Naive thymus-derived CD4-positive, alpha-beta T cell (primary cell): ENCODE measurements at regions of chr6 and their contacts with region 1.

Region 1: GRCh38 chr6:31769684-31770371 is 7.3 kb downstream of the VWA7 start:
- DNase-seq: peak; percentile 56 to 85 (median 71)
- ATAC-seq: peak; percentile 89
- H3K4me3 ChIP-seq: no peak overlapping the region
- H3K4me3 Mint-ChIP-seq: peak overlapping the region in 3 of 10 donors; percentile 2 to 45 (median 7)
- H3K27ac ChIP-seq: no peak overlapping the region
- H3K27ac Mint-ChIP-seq: peak overlapping the region in 4 of 9 donors; percentile 6 to 68 (median 38)
- H3K4me1 ChIP-seq: peaks cover 23 to 27% of the 10 kb centered on the region in 2 donors
- H3K4me1 Mint-ChIP-seq: peaks cover 4 to 38% (median 34%) of the 10 kb centered on the region in 7 donors
- H3K27me3 ChIP-seq: no peaks in the 10 kb centered on the region
- H3K27me3 Mint-ChIP-seq: no peaks in the 10 kb centered on the region

Region 2: DNA sequence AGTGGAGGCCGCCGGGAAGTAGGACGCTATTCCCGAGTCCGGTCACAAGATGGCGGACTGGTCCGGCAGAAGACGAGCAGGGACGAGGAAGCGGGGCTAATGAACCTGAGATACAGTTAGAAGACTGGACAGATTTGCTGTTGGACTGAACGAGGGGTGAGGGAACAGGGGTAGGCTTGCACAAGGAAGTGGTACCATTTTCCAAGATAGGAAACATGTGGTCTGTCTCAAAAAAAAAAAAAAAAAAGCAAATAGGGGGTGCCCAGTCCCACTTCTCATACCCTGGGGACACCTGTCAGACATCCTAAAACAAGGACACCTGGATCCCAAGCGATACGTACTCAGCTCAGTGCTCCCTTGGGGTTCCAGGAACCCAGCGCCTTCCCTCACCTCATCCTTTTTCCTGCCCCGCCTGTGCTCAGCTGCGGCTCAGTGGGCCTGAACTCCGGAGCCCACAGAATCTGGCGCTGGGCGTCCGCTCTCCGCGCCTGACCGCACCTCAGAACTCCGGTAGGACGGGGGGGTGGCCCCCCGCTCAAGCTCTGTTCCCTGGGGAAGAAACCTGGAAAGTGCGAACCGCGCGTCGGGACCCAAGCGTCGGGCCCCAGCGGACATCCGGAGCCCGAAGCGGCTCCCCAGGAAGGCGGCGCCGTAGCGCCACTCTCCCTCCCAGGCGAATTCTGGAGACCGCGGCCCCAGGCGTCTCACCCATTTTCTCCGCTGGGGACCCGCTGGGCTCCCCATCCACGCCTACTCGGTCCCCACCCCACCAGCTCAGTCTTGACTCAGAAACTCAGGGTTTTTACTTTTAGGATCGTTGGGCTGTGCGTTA is 88.8 kb before region 1 on chr6 and contains the start of gene LY6G5C:
- CTCF ChIA-PET with region 1: interaction called, 3 read pairs
- POLR2A ChIA-PET with region 1: no interaction called
- intact Hi-C with region 1: loop called in 1 of 2 experiments (anchors 2 kb)
- DNase-seq: peak in 8 of 9 donors; percentile 28 to 65 (median 48)
- ATAC-seq: peak; percentile 80
- H3K4me3 ChIP-seq: peak within 1 kb of the TSS; percentile 78
- H3K4me3 Mint-ChIP-seq: peak within 1 kb of the TSS; percentile 86 to 98 (median 90)
- H3K27ac ChIP-seq: peak within 1 kb of the TSS; percentile 68
- H3K27ac Mint-ChIP-seq: peak within 1 kb of the TSS; percentile 60 to 86 (median 68)
- H3K4me1 ChIP-seq: peaks cover 15 to 16% of the 10 kb centered on the region in 2 donors
- H3K4me1 Mint-ChIP-seq: peaks cover 14 to 32% (median 19%) of the 10 kb centered on the region in 7 donors
- H3K27me3 ChIP-seq: no peaks in the 10 kb centered on the region
- H3K27me3 Mint-ChIP-seq: no peaks in the 10 kb centered on the region
- total RNA-seq, gene LY6G5C: 2.4 to 4.3 (median 3.1) TPM

Region 3: GRCh38 chr6:31862344-31863227 is 92.8 kb after region 1 on chr6 and contains the start of gene NEU1:
- CTCF ChIA-PET with region 1: no interaction called
- POLR2A ChIA-PET with region 1: no interaction called
- intact Hi-C with region 1: no loop called
- DNase-seq: peak; percentile 87 to 100 (median 99)
- ATAC-seq: peak; percentile 97
- H3K4me3 ChIP-seq: peak within 1 kb of the TSS; percentile 97
- H3K4me3 Mint-ChIP-seq: peak within 1 kb of the TSS; percentile 87 to 96 (median 93)
- H3K27ac ChIP-seq: peak within 1 kb of the TSS; percentile 86
- H3K27ac Mint-ChIP-seq: peak within 1 kb of the TSS; percentile 85 to 97 (median 93)
- H3K4me1 ChIP-seq: peaks cover 8 to 15% of the 10 kb centered on the region in 2 donors
- H3K4me1 Mint-ChIP-seq: peaks cover 14 to 29% (median 20%) of the 10 kb centered on the region in 7 donors
- H3K27me3 ChIP-seq: no peaks in the 10 kb centered on the region
- H3K27me3 Mint-ChIP-seq: peaks cover 0 to 2% (median 0%) of the 10 kb centered on the region in 5 donors
- total RNA-seq, gene NEU1: 18.6 to 35.0 (median 20.1) TPM